Posterior vena cava (tissue), 2 donors: ENCODE measurements at regions of chr2 and their contacts with region 1.

Region 1: DNA sequence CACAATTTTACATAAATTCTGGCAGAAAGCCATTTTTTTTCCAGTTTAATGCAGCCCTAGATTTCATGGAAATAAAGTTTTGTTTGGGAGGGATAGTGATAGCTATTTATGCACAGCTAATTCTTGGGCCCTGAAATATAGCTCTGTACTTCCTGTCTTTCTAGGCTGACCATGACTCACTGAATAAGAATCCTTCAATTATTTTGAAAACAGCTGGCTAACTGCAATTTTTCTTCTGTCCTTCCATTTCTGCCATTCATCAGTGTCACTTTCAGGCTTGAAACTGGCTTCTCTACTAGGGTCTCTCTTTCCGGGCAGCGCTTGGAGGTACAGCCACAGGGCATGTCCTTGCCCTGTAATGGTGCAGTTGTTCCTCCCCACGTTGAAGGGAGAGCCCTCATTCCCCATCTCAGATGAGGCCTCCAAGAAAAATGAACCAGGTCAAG is 97.1 kb upstream of the TMEM178A start:
- DNase-seq: no peak

Region 2: DNA sequence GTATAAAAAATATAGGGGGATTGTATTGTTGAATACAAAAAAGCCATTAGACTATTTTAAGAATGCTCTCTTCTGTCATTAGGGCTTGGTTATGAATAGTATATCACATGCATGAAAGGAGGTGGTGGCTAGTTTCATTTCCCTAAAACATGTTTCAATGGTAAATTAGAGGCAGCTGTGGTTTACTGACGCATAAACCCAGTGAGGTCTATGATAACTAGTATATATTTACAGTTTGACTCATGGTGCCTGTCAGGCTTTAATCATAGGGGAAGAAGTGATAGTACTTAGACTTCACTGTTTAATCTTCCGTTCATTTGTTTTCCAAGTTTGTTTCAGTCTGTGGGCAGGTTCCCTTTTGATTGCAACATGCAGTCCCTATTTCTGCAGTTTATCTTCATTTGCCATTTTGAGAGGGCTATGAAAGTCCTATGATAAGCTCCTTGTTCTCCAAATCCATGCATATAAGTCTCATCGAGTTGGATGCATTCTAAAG is 76.4 kb before region 1 on chr2:
- intact Hi-C with region 1: no loop called
- DNase-seq: no peak

Region 3: GRCh38 chr2:39584283-39584965 is 15.8 kb after region 1 on chr2:
- intact Hi-C with region 1: no loop called
- DNase-seq: no peak

Region 4: DNA sequence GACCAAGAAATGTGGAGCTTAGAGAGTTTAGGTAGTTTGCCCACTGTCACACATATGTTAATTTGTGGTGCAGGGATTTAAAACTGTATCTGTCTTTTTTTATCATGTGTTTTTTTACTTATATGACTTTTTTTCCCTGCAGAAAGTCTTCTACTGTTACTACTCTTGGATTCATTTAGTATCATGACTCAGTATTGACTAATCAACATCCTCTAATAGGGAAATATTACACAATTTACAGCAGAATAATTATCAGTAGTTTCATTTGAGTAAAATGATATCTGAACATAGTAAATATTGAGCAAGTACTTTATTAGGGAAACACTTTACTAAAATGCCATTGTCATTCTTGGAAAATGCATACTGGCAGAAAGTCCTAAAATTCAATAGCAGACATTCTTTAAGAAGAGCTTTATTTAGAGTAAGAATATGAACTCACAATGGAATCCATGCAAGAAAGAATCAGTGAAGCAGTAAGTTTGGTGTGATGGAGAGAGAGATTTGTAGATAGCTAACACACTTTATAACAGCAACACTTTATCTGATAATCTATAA is 1309.2 kb after region 1 on chr2:
- intact Hi-C with region 1: loop called in 1 of 2 experiments (anchors 10 kb)
- DNase-seq: no peak